Spleen (tissue), 13 donors: ENCODE measurements at regions of chr6 and their contacts with region 1.

Region 1: GRCh38 chr6:135675862-135676261 is 175.6 kb upstream of the PDE7B start:
- DNase-seq: no peak
- H3K4me3 ChIP-seq: no peak overlapping the region
- H3K27ac ChIP-seq: no peak overlapping the region
- H3K4me1 ChIP-seq: no peaks in the 10 kb centered on the region
- H3K27me3 ChIP-seq: no peaks in the 10 kb centered on the region
- CTCF ChIP-seq: peak in 7 of 11 experiments; percentile 8 to 50 (median 28)
- POLR2A ChIP-seq: no peak

Region 2: GRCh38 chr6:135481783-135482369 is 194.0 kb before region 1 on chr6:
- intact Hi-C with region 1: no loop called
- DNase-seq: no peak
- H3K4me3 ChIP-seq: no peak overlapping the region
- H3K27ac ChIP-seq: no peak overlapping the region
- H3K4me1 ChIP-seq: no peaks in the 10 kb centered on the region
- H3K27me3 ChIP-seq: no peaks in the 10 kb centered on the region
- CTCF ChIP-seq: no peak
- POLR2A ChIP-seq: no peak

Region 3: DNA sequence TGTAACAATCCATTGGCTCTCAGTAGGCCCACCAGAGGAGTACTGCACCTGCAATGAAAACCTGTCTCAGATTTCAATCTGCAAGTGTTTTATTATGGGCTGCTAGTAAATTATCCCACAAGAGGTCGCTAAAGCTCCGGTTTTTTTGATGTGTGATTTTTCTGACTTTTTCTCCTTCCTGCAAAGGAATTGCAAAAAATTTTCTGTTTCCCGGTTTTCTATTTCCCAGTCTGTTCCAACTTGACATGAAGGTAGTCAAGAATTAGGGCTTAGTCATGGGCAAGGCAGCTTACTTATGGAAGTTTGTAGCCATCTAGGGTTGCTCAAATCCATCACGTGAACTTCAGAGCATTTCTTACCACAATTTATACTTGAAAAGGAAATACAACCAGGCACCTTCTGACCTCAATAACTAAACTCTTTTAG is 139.9 kb before region 1 on chr6:
- intact Hi-C with region 1: no loop called
- DNase-seq: no peak
- H3K4me3 ChIP-seq: no peak overlapping the region
- H3K27ac ChIP-seq: no peak overlapping the region
- H3K4me1 ChIP-seq: peaks cover 0 to 11% (median 6%) of the 10 kb centered on the region in 6 donors
- H3K27me3 ChIP-seq: no peaks in the 10 kb centered on the region
- CTCF ChIP-seq: peak in 10 of 11 experiments; percentile 17 to 71 (median 58)
- POLR2A ChIP-seq: no peak

Region 4: DNA sequence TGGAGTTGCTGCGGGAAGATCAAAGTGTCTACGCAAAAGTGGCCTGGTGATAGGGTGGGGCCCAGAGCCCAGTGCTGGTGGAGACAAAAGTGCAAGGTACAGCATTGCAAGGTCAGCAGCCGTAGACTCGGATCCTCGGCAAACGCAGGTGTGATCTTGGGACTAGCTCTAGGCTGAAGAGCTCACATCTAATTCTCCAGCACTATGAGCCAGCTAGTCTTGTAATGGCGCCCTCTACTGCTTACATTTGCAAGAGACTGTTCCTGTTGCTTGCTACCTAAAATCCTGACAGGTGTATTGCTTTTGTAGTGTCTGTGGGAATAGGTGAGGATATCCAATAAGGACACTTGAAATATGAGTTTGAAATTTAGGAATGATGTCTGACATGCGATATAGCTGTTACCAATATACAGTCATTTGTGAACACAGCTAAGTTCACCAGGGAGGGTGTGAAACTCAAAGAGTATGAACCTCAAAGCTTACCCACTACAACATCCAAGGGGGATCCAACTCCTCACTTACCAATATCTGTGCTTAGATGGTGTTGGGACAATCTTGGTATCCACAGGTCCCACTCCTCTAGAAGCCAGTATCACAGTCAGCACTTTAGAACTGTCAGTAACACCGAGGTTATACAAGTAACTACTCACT is 234.0 kb after region 1 on chr6:
- intact Hi-C with region 1: loop called (anchors 5 kb)
- DNase-seq: no peak
- H3K4me3 ChIP-seq: no peak overlapping the region
- H3K27ac ChIP-seq: no peak overlapping the region
- H3K4me1 ChIP-seq: peaks cover 0 to 4% (median 0%) of the 10 kb centered on the region in 6 donors
- H3K27me3 ChIP-seq: no peaks in the 10 kb centered on the region
- CTCF ChIP-seq: peak; percentile 20 to 74 (median 56)
- POLR2A ChIP-seq: no peak

Region 5: GRCh38 chr6:136226027-136226673 is 550.3 kb after region 1 on chr6:
- intact Hi-C with region 1: loop called (anchors 10 kb)
- DNase-seq: peak; percentile 85
- H3K4me3 ChIP-seq: peak overlapping the region in 4 of 8 donors; percentile 14 to 53 (median 21)
- H3K27ac ChIP-seq: peak overlapping the region in 1 of 8 donors; percentile 34
- H3K4me1 ChIP-seq: peaks cover 0 to 37% (median 17%) of the 10 kb centered on the region in 6 donors
- H3K27me3 ChIP-seq: no peaks in the 10 kb centered on the region
- CTCF ChIP-seq: peak; percentile 91 to 99 (median 96)
- POLR2A ChIP-seq: no peak